Activated CD4-positive, alpha-beta memory T cell treated with anti-CD3 and anti-CD28 coated beads for 36 hours (primary cell): ENCODE measurements at regions of chr2 and their contacts with region 1.

Region 1: DNA sequence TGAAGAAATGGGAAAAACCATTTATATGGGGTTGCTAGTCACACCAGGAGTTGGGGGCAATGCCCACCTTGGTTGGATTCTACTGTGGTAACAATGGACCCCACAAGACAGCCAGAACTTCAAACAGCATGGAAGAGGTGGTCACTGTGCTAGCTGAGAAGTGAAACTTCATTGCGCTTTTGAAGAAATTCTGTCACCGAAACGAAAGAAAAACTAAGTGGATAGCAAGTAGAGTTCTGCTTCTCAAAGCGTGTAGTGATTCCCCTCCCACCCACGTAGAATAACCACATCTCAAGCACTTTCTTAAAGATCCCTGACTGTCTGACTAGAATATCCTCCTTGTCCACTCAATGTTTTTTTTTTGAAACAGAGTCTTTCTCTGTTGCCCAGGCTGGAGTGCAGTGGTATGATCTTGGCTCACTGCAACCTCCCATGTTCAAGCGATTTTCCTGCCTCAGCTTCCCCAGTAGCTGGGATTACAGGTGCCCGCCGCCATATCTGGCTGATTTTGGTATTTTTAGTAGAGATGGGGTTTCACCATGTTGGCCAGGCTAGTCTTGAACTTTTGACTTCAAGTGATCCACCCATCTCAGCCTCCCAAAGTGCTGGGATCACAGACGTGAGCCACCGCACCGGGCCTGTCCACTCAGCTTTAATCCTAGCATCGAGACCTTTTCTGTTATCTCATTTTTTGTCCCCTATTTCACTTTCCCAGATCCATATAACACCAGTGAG is 30.1 kb upstream of the CCL20 start:
- DNase-seq: peak; percentile 18
- H3K4me3 Mint-ChIP-seq: peak overlapping the region; percentile 66
- H3K27ac Mint-ChIP-seq: peak overlapping the region; percentile 77
- H3K4me1 Mint-ChIP-seq: peaks cover 19% of the 10 kb centered on the region
- H3K27me3 Mint-ChIP-seq: peaks cover 5% of the 10 kb centered on the region

Region 2: GRCh38 chr2:227805578-227805977 is 22.0 kb after region 1 on chr2:
- CTCF ChIA-PET with region 1: interaction called, 7 read pairs
- POLR2A ChIA-PET with region 1: interaction called, 11 read pairs
- intact Hi-C with region 1: loop called (anchors 1 kb)
- DNase-seq: peak; percentile 66
- H3K4me3 Mint-ChIP-seq: peak overlapping the region; percentile 72
- H3K27ac Mint-ChIP-seq: peak overlapping the region; percentile 81
- H3K4me1 Mint-ChIP-seq: peaks cover 14% of the 10 kb centered on the region
- H3K27me3 Mint-ChIP-seq: peaks cover 1% of the 10 kb centered on the region

Region 3: GRCh38 chr2:227848586-227848985 is 65.0 kb after region 1 on chr2:
- CTCF ChIA-PET with region 1: no interaction called
- POLR2A ChIA-PET with region 1: no interaction called
- intact Hi-C with region 1: loop called (anchors 1 kb)
- DNase-seq: peak; percentile 31
- H3K4me3 Mint-ChIP-seq: peak overlapping the region; percentile 55
- H3K27ac Mint-ChIP-seq: peak overlapping the region; percentile 84
- H3K4me1 Mint-ChIP-seq: peaks cover 28% of the 10 kb centered on the region
- H3K27me3 Mint-ChIP-seq: no peaks in the 10 kb centered on the region

Region 4: GRCh38 chr2:228180181-228181097 is 396.9 kb after region 1 on chr2:
- CTCF ChIA-PET with region 1: no interaction called
- POLR2A ChIA-PET with region 1: no interaction called
- intact Hi-C with region 1: no loop called
- DNase-seq: no peak
- H3K4me3 Mint-ChIP-seq: no peak overlapping the region
- H3K27ac Mint-ChIP-seq: no peak overlapping the region
- H3K4me1 Mint-ChIP-seq: no peaks in the 10 kb centered on the region
- H3K27me3 Mint-ChIP-seq: peaks cover 12% of the 10 kb centered on the region